Activated CD4-positive, alpha-beta T cell treated with anti-CD3 and anti-CD28 coated beads, Interleukin-2, amount 10 ng/mL, durations not matched to agents 7 days and 5 days (primary cell): ENCODE measurements at regions of chr15 and their contacts with region 1.

Region 1: GRCh38 chr15:31488426-31489204 is 162.0 kb downstream of the KLF13 start:
- DNase-seq: peak; percentile 55
- H3K4me3 Mint-ChIP-seq: no peak overlapping the region
- H3K27ac Mint-ChIP-seq: peak overlapping the region; percentile 61
- H3K4me1 Mint-ChIP-seq: peaks cover 63% of the 10 kb centered on the region
- H3K27me3 Mint-ChIP-seq: no peaks in the 10 kb centered on the region

Region 2: DNA sequence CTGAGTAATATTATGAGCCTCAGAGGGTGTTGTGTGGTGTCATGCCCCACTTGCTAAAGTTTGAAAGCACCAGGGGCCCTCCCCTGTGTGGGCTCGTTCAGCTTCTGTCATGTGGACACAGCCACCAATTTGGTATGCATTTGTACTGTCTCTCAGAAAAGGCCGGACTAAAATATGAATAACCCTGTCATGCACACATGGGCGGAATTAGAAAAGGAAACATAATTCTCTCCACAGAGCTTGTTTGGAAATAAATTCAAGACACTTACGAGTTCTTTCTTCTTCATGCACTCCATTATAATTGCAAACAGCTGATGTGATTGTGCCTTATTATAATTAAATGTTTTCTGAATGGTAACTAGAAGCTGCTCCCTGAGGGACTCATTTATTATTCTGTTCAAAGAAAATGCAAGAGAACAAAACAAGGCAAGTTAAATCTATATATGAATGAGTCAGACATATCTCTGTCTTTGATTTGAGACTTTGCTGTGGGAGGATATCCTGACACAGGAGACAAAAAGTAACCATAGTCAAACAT is 426.2 kb before region 1 on chr15:
- CTCF ChIA-PET with region 1: no interaction called
- POLR2A ChIA-PET with region 1: no interaction called
- DNase-seq: no peak
- H3K4me3 Mint-ChIP-seq: no peak overlapping the region
- H3K27ac Mint-ChIP-seq: no peak overlapping the region
- H3K4me1 Mint-ChIP-seq: no peaks in the 10 kb centered on the region
- H3K27me3 Mint-ChIP-seq: peaks cover 9% of the 10 kb centered on the region

Region 3: GRCh38 chr15:31200735-31201151 is 287.9 kb before region 1 on chr15:
- CTCF ChIA-PET with region 1: interaction called, 17 read pairs
- POLR2A ChIA-PET with region 1: no interaction called
- DNase-seq: peak; percentile 84
- H3K4me3 Mint-ChIP-seq: no peak overlapping the region
- H3K27ac Mint-ChIP-seq: peak overlapping the region; percentile 31
- H3K4me1 Mint-ChIP-seq: peaks cover 45% of the 10 kb centered on the region
- H3K27me3 Mint-ChIP-seq: peaks cover 18% of the 10 kb centered on the region

Region 4: GRCh38 chr15:31435261-31435911 is 53.2 kb before region 1 on chr15:
- CTCF ChIA-PET with region 1: interaction called, 32 read pairs
- POLR2A ChIA-PET with region 1: no interaction called
- DNase-seq: peak; percentile 88
- H3K4me3 Mint-ChIP-seq: peak overlapping the region; percentile 59
- H3K27ac Mint-ChIP-seq: peak overlapping the region; percentile 95
- H3K4me1 Mint-ChIP-seq: peaks cover 84% of the 10 kb centered on the region
- H3K27me3 Mint-ChIP-seq: no peaks in the 10 kb centered on the region

Region 5: GRCh38 chr15:31440754-31441311 is 47.8 kb before region 1 on chr15:
- CTCF ChIA-PET with region 1: interaction called, 32 read pairs
- POLR2A ChIA-PET with region 1: no interaction called
- DNase-seq: peak; percentile 50
- H3K4me3 Mint-ChIP-seq: peak overlapping the region; percentile 78
- H3K27ac Mint-ChIP-seq: peak overlapping the region; percentile 91
- H3K4me1 Mint-ChIP-seq: peaks cover 66% of the 10 kb centered on the region
- H3K27me3 Mint-ChIP-seq: no peaks in the 10 kb centered on the region

Region 6: GRCh38 chr15:31465083-31465955 is 23.3 kb before region 1 on chr15:
- CTCF ChIA-PET with region 1: interaction called, 10 read pairs
- POLR2A ChIA-PET with region 1: no interaction called
- DNase-seq: no peak
- H3K4me3 Mint-ChIP-seq: no peak overlapping the region
- H3K27ac Mint-ChIP-seq: no peak overlapping the region
- H3K4me1 Mint-ChIP-seq: peaks cover 6% of the 10 kb centered on the region
- H3K27me3 Mint-ChIP-seq: no peaks in the 10 kb centered on the region

Region 7: DNA sequence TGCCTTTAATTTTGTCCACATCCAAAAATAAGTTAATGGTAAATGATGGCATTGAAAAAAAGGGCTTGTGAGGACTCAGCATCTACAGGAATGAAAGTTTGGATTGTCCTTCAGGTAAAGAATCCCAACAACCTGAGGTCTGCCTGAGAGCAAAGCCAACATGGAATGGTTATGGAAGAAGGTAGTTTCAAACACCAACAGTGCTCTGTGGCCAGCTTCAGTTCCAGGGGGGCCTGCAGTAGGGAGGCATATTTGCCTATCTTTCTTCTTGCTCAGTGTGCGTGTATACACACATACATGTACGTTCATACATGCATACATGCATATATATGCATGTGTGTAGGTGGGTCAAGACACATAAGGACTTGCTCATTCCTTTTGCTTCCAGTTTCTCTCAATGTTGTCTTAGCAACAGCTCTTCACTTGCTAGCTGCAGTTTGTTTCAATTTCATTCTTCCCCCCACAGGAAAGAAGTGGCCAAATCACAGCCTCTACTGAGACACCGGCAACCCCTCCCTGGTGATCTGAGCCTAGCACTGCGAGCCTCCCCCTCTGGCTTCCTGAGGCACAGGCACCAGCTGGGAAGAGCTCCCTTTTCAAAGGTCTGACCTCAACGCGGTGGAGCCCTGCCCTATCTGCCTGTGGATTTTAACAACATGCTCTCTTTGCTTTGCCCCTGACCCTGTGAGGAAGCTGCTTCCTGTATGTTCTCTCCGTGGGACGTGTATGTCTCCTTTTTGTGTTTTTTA is 15.8 kb before region 1 on chr15:
- CTCF ChIA-PET with region 1: interaction called, 37 read pairs
- POLR2A ChIA-PET with region 1: no interaction called
- DNase-seq: peak; percentile 82
- H3K4me3 Mint-ChIP-seq: peak overlapping the region; percentile 62
- H3K27ac Mint-ChIP-seq: peak overlapping the region; percentile 92
- H3K4me1 Mint-ChIP-seq: peaks cover 43% of the 10 kb centered on the region
- H3K27me3 Mint-ChIP-seq: no peaks in the 10 kb centered on the region

Region 8: GRCh38 chr15:31499953-31500765 is 11.5 kb after region 1 on chr15:
- CTCF ChIA-PET with region 1: interaction called, 32 read pairs
- POLR2A ChIA-PET with region 1: no interaction called
- DNase-seq: no peak
- H3K4me3 Mint-ChIP-seq: no peak overlapping the region
- H3K27ac Mint-ChIP-seq: no peak overlapping the region
- H3K4me1 Mint-ChIP-seq: no peaks in the 10 kb centered on the region
- H3K27me3 Mint-ChIP-seq: peaks cover 2% of the 10 kb centered on the region

Region 9: GRCh38 chr15:31537770-31538592 is 49.4 kb after region 1 on chr15:
- CTCF ChIA-PET with region 1: no interaction called
- POLR2A ChIA-PET with region 1: no interaction called
- DNase-seq: no peak
- H3K4me3 Mint-ChIP-seq: no peak overlapping the region
- H3K27ac Mint-ChIP-seq: no peak overlapping the region
- H3K4me1 Mint-ChIP-seq: no peaks in the 10 kb centered on the region
- H3K27me3 Mint-ChIP-seq: peaks cover 51% of the 10 kb centered on the region